B cell (primary cell): ENCODE measurements at regions of chr6 and their contacts with region 1.

Region 1: DNA sequence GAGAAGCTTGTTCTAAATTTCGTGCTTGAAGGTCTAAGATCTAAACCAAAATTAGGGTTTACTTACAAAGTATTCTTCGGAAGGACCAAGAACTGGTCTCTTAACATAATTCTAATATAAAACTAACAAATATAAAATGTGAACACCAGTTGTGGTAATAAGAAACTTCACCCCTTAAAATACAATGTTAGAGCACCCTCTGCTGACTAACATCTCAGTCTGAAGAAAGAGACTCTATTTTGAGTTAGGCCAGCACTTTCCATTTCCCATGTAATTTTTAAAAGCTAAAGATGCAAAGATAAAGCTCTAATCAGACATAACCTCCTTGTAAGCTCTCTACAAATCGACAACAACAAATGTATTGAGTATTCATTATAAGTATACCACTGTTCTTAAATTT is 24.6 kb downstream of the ATG5 start:
- DNase-seq: peak; percentile 20
- ATAC-seq: no peak
- H3K4me3 ChIP-seq: no peak overlapping the region
- H3K4me3 Mint-ChIP-seq: no peak overlapping the region
- H3K27ac ChIP-seq: no peak overlapping the region
- H3K27ac Mint-ChIP-seq: no peak overlapping the region
- H3K4me1 ChIP-seq: no peaks in the 10 kb centered on the region
- H3K4me1 Mint-ChIP-seq: no peaks in the 10 kb centered on the region
- H3K27me3 ChIP-seq: no peaks in the 10 kb centered on the region
- H3K27me3 Mint-ChIP-seq: no peaks in the 10 kb centered on the region
- CTCF ChIP-seq: peak; percentile 50

Region 2: GRCh38 chr6:105431226-105431625 is 869.7 kb before region 1 on chr6:
- CTCF ChIA-PET with region 1: interaction called, 14 read pairs
- POLR2A ChIA-PET with region 1: no interaction called
- intact Hi-C with region 1: loop called (anchors 5 kb)
- DNase-seq: peak; percentile 52
- ATAC-seq: no peak
- H3K4me3 ChIP-seq: no peak overlapping the region
- H3K4me3 Mint-ChIP-seq: no peak overlapping the region
- H3K27ac ChIP-seq: no peak overlapping the region
- H3K27ac Mint-ChIP-seq: no peak overlapping the region
- H3K4me1 ChIP-seq: no peaks in the 10 kb centered on the region
- H3K4me1 Mint-ChIP-seq: no peaks in the 10 kb centered on the region
- H3K27me3 ChIP-seq: peaks cover 0 to 7% (median 0%) of the 10 kb centered on the region in 4 experiments
- H3K27me3 Mint-ChIP-seq: peaks cover 8% of the 10 kb centered on the region
- CTCF ChIP-seq: peak; percentile 66

Region 3: DNA sequence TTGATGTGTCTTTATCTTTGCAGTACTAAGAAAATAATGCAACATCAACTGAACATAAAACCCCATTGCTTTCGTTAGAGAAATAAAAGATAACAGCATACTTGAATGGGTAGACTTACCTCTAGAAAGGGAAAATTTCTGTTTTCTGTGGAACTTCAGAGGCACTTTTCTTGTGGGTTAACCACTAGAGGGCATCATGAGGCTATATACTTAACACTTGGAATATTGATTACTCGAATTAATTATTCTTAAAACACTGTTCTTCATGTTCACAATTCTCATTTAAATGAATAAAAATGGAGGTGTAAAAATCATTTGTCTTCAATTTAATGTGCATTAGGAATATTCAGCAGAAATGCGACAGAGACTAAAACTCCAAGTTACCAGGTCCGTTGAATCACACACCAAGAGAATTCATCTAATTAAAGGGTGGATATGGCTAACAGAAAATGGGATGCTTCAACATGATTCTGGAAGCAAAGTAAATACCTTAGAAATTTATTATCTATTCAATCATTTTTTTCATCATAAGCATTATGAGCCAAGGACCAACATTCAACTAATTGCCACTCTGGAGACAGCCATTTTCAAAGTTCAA is 567.3 kb before region 1 on chr6:
- CTCF ChIA-PET with region 1: no interaction called
- POLR2A ChIA-PET with region 1: no interaction called
- intact Hi-C with region 1: loop called (anchors 1 kb)
- DNase-seq: peak; percentile 50
- ATAC-seq: no peak
- H3K4me3 ChIP-seq: no peak overlapping the region
- H3K4me3 Mint-ChIP-seq: no peak overlapping the region
- H3K27ac ChIP-seq: no peak overlapping the region
- H3K27ac Mint-ChIP-seq: no peak overlapping the region
- H3K4me1 ChIP-seq: no peaks in the 10 kb centered on the region
- H3K4me1 Mint-ChIP-seq: no peaks in the 10 kb centered on the region
- H3K27me3 ChIP-seq: no peaks in the 10 kb centered on the region
- H3K27me3 Mint-ChIP-seq: no peaks in the 10 kb centered on the region
- CTCF ChIP-seq: peak; percentile 76

Region 4: DNA sequence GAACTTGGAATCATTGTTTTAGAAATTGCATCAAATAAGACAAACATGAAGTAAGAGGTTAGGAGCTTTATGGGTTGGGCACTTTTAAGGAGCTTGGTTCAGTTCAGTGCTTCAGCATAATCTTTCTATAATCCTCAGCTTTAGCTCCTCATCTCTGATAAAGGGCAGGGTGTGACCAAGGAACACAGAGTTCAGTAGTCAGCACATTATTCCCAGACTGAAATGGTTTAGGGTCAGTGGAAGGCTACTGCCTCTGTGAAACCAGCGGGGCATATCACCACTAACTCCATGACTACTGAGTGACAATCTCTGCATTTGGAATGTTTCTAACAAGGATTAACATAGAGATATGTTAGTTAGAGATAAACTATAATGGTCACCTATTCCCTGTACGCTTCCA is 96.5 kb after region 1 on chr6:
- CTCF ChIA-PET with region 1: no interaction called
- POLR2A ChIA-PET with region 1: no interaction called
- intact Hi-C with region 1: no loop called
- DNase-seq: no peak
- ATAC-seq: no peak
- H3K4me3 ChIP-seq: no peak overlapping the region
- H3K4me3 Mint-ChIP-seq: no peak overlapping the region
- H3K27ac ChIP-seq: no peak overlapping the region
- H3K27ac Mint-ChIP-seq: no peak overlapping the region
- H3K4me1 ChIP-seq: no peaks in the 10 kb centered on the region
- H3K4me1 Mint-ChIP-seq: no peaks in the 10 kb centered on the region
- H3K27me3 ChIP-seq: peaks cover 0 to 9% (median 6%) of the 10 kb centered on the region in 4 experiments
- H3K27me3 Mint-ChIP-seq: peaks cover 36% of the 10 kb centered on the region
- CTCF ChIP-seq: no peak